Esophagus muscularis mucosa (tissue), 4 donors: ENCODE measurements at regions of chr14 and their contacts with region 1.

Region 1: DNA sequence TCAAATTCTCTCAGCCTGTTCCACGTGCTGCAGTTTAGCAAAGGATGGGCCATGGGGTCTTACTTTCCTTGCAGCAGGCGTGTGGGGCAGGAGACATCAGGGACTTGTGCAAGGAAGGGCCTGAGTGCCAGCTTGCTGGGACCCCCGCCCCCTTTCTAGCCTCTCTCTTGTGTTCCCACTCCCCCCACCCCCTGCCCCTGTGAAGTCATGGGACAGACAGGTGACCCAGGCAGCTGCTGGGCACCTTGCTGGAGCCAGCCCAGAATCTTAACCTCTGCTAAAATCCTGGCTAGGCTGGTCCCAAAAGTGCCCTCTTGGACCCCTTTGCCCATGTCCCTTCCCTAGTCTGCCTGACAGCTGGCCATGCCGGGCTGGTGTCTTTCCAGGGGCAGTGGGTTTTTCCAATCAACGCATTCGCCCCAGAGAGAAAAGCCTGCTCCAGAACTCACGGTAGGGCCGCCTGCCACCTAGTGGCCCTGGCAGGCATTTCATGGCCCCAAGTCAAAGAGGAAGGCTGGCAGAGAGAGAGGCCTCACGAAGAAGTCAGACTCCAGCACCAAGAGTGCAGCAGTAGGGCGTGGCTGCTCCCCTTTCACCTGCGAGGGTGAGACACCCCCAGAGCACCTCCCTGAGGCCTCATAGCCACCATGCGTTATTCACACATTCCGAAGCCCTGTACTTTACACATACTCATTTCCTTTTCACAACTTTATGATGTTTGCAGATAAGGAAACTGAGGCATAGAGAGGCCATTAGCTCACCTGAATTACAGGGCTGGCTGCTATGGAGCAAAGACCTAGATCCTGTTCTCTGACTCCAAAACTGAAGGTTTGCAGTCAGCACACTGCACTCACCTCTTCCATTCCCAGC is 67.4 kb downstream of the LGMN start:
- DNase-seq: no peak
- H3K4me3 ChIP-seq: no peak overlapping the region
- H3K27ac ChIP-seq: no peak overlapping the region
- H3K4me1 ChIP-seq: peaks cover 3 to 14% (median 10%) of the 10 kb centered on the region in 4 donors
- H3K27me3 ChIP-seq: no peaks in the 10 kb centered on the region
- CTCF ChIP-seq: peak; percentile 84 to 96 (median 92)
- EP300 ChIP-seq: no peak
- POLR2A ChIP-seq: no peak

Region 2: GRCh38 chr14:91439345-91439744 is 1241.7 kb before region 1 on chr14:
- intact Hi-C with region 1: no loop called
- DNase-seq: no peak
- H3K4me3 ChIP-seq: no peak overlapping the region
- H3K27ac ChIP-seq: no peak overlapping the region
- H3K4me1 ChIP-seq: no peaks in the 10 kb centered on the region
- H3K27me3 ChIP-seq: peaks cover 0 to 6% (median 0%) of the 10 kb centered on the region in 4 donors
- CTCF ChIP-seq: no peak
- EP300 ChIP-seq: no peak
- POLR2A ChIP-seq: no peak

Region 3: GRCh38 chr14:92585981-92586937 is 94.8 kb before region 1 on chr14:
- intact Hi-C with region 1: loop called (anchors 5 kb)
- DNase-seq: no peak
- H3K4me3 ChIP-seq: no peak overlapping the region
- H3K27ac ChIP-seq: peak overlapping the region; percentile 39 to 79 (median 66)
- H3K4me1 ChIP-seq: peaks cover 25 to 48% (median 34%) of the 10 kb centered on the region in 4 donors
- H3K27me3 ChIP-seq: no peaks in the 10 kb centered on the region
- CTCF ChIP-seq: no peak
- EP300 ChIP-seq: no peak
- POLR2A ChIP-seq: no peak

Region 4: DNA sequence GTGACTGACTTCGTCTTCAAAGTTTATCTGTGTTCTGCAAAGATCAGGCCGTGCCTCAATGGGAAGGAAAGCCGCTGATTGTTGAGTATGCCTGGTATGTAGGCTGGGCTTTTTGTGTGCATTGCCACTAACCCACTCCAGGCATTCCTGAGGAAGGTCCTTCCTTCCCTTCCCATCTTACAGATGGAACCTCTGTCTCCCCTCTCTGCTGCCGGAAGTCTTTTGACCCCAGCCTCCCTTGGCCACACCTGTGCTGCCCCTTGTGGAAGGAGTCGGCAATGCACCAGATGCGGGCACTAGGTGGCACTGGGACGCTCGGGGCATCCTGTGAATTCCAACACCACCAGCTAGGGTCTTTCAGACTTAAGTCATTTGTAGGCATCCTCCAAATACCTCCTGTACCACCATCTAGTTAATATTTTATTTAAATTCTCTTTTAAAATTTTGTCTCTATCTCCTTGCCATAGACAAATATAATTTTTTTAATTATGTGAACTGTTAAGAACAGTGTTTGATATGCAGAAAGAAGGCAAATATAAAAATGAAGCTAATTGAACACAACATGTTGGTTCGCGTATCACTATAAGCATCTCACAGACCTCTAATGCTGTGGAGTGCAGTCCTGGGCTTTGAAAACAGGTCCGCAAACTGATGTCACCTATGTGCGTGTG is 67.9 kb before region 1 on chr14:
- intact Hi-C with region 1: loop called (anchors 5 kb)
- DNase-seq: no peak
- H3K4me3 ChIP-seq: no peak overlapping the region
- H3K27ac ChIP-seq: no peak overlapping the region
- H3K4me1 ChIP-seq: peaks cover 0 to 32% (median 12%) of the 10 kb centered on the region in 4 donors
- H3K27me3 ChIP-seq: no peaks in the 10 kb centered on the region
- CTCF ChIP-seq: peak; percentile 46 to 64 (median 62)
- EP300 ChIP-seq: no peak
- POLR2A ChIP-seq: no peak